CD4-positive, alpha-beta T cell (primary cell): ENCODE measurements at regions of chr10 and their contacts with region 1.

Region 1: GRCh38 chr10:87861953-87862678 is 1.2 kb downstream of the KLLN start:
- DNase-seq: peak; percentile 89 to 98 (median 92)
- ATAC-seq: peak; percentile 72
- H3K4me3 ChIP-seq: peak overlapping the region; percentile 94
- H3K4me3 Mint-ChIP-seq: peak overlapping the region; percentile 96
- H3K27ac ChIP-seq: peak overlapping the region; percentile 81 to 84
- H3K27ac Mint-ChIP-seq: peak overlapping the region; percentile 92
- H3K4me1 ChIP-seq: peaks cover 22% of the 10 kb centered on the region
- H3K4me1 Mint-ChIP-seq: peaks cover 43% of the 10 kb centered on the region
- H3K27me3 ChIP-seq: no peaks in the 10 kb centered on the region
- H3K27me3 Mint-ChIP-seq: no peaks in the 10 kb centered on the region
- CTCF ChIP-seq: no peak

Region 2: GRCh38 chr10:87804939-87805569 is 57.1 kb before region 1 on chr10:
- CTCF ChIA-PET with region 1: no interaction called
- POLR2A ChIA-PET with region 1: no interaction called
- intact Hi-C with region 1: no loop called
- DNase-seq: no peak
- ATAC-seq: no peak
- H3K4me3 ChIP-seq: no peak overlapping the region
- H3K4me3 Mint-ChIP-seq: no peak overlapping the region
- H3K27ac ChIP-seq: no peak overlapping the region
- H3K27ac Mint-ChIP-seq: no peak overlapping the region
- H3K4me1 ChIP-seq: no peaks in the 10 kb centered on the region
- H3K4me1 Mint-ChIP-seq: peaks cover 50% of the 10 kb centered on the region
- H3K27me3 ChIP-seq: no peaks in the 10 kb centered on the region
- H3K27me3 Mint-ChIP-seq: no peaks in the 10 kb centered on the region
- CTCF ChIP-seq: no peak

Region 3: DNA sequence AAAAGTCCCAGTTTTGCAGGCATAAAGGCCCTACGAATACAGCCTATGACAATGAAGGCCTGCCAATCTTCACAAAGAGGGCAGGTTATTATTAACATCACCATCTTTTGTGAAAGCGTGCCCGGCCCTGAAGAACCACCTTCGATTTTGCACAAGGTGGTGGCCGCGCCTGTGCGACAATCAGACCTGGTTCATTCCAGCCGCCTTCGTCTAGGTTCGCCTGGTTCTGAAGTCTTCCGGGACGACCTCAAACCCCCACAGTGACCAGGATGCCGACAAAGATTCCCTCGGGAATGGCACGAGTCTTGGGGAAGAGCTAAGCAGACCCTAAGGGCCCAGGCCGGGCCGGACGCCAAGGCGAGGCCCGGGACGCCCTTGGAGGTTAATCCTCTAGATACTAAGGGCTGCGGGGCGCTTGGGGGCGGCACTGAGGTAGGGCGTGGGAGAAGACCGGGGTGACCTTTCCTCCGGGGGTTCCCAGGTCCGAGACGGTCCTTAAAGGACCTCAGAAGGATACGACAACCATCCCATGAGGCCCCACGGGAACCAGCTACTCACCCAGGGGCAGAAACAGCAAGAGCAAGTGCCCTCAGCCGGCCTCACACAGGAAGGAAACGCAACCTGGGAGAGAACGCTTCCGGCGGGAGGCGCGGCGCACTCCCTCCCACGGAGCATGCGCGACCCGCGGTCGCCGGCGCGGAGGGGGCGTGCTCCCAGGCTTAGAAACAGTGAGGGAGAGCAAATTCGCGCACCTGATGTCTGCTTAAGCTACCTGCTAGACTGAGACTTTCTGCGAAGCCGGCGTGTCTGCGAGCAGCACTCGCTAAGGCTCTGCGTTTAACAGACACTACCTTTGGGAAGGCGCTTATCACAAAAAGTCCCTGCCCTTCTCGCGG is 44.3 kb before region 1 on chr10 and contains the start of gene ATAD1:
- CTCF ChIA-PET with region 1: interaction called, 13 read pairs
- POLR2A ChIA-PET with region 1: interaction called, 105 read pairs
- intact Hi-C with region 1: loop called (anchors 2 to 5 kb)
- DNase-seq: peak; percentile 78 to 95 (median 86)
- ATAC-seq: peak; percentile 79
- H3K4me3 ChIP-seq: peak within 1 kb of the TSS; percentile 93
- H3K4me3 Mint-ChIP-seq: peak within 1 kb of the TSS; percentile 92
- H3K27ac ChIP-seq: peak within 1 kb of the TSS; percentile 93 to 98
- H3K27ac Mint-ChIP-seq: peak within 1 kb of the TSS; percentile 99
- H3K4me1 ChIP-seq: peaks cover 19% of the 10 kb centered on the region
- H3K4me1 Mint-ChIP-seq: peaks cover 47% of the 10 kb centered on the region
- H3K27me3 ChIP-seq: no peaks in the 10 kb centered on the region
- H3K27me3 Mint-ChIP-seq: no peaks in the 10 kb centered on the region
- CTCF ChIP-seq: peak; percentile 5
- total RNA-seq, gene ATAD1: 33.7 to 38.7 TPM

Region 4: DNA sequence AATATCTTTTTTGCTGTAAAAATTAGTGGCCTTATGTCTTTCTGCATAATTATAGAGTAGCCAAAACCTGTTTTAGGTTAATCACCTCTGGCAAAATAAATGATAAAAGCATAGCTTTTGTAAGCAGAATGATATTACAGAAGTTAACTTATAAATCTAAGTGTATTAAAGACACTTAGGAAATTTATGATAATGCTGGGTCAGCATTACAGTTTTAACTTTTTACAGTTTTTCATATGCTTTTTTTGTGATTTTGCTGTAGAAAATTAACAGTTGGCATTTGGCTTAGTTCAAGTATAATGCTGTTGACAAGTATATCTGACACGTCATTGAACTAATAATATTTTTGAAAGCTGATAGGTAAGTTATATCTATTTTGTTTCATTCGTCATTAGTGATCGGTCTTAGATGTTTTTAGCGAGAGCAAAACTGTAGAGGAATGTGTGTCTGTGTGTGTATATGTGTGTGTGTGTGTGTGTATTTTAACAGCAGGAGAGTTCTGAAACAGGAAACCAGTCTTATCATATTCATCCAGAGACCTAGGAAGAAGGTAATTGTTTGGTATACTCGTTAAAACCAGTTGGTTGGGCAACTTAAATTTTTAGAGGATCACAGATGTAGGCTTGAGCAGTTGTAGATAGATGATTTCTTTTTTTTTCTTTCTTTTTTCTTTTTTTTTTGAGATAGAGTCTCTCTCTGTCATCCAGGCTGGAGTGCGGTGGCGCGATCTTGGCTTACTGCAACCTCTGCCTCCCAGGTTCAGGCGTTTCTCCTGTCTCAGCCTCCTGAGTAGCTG is 16.7 kb after region 1 on chr10:
- CTCF ChIA-PET with region 1: interaction called, 7 read pairs
- POLR2A ChIA-PET with region 1: interaction called, 30 read pairs
- intact Hi-C with region 1: loop called in 1 of 2 experiments (anchors 1 kb)
- DNase-seq: no peak
- ATAC-seq: no peak
- H3K4me3 ChIP-seq: no peak overlapping the region
- H3K4me3 Mint-ChIP-seq: peak overlapping the region; percentile 0
- H3K27ac ChIP-seq: no peak overlapping the region
- H3K27ac Mint-ChIP-seq: peak overlapping the region; percentile 4
- H3K4me1 ChIP-seq: no peaks in the 10 kb centered on the region
- H3K4me1 Mint-ChIP-seq: peaks cover 70% of the 10 kb centered on the region
- H3K27me3 ChIP-seq: no peaks in the 10 kb centered on the region
- H3K27me3 Mint-ChIP-seq: no peaks in the 10 kb centered on the region
- CTCF ChIP-seq: no peak

Region 5: GRCh38 chr10:87952612-87953011 is 90.5 kb after region 1 on chr10:
- CTCF ChIA-PET with region 1: no interaction called
- POLR2A ChIA-PET with region 1: interaction called, 9 read pairs
- intact Hi-C with region 1: loop called in 1 of 2 experiments (anchors 5 kb)
- DNase-seq: no peak
- ATAC-seq: no peak
- H3K4me3 ChIP-seq: no peak overlapping the region
- H3K4me3 Mint-ChIP-seq: no peak overlapping the region
- H3K27ac ChIP-seq: no peak overlapping the region
- H3K27ac Mint-ChIP-seq: peak overlapping the region; percentile 1
- H3K4me1 ChIP-seq: no peaks in the 10 kb centered on the region
- H3K4me1 Mint-ChIP-seq: peaks cover 30% of the 10 kb centered on the region
- H3K27me3 ChIP-seq: no peaks in the 10 kb centered on the region
- H3K27me3 Mint-ChIP-seq: no peaks in the 10 kb centered on the region
- CTCF ChIP-seq: no peak

Region 6: GRCh38 chr10:88114368-88114767 is 252.3 kb after region 1 on chr10:
- CTCF ChIA-PET with region 1: interaction called, 4 read pairs
- POLR2A ChIA-PET with region 1: interaction called, 15 read pairs
- intact Hi-C with region 1: loop called (anchors 1 to 2 kb)
- DNase-seq: peak in 7 of 14 experiments; percentile 4 to 64 (median 43)
- ATAC-seq: peak; percentile 62
- H3K4me3 ChIP-seq: no peak overlapping the region
- H3K4me3 Mint-ChIP-seq: no peak overlapping the region
- H3K27ac ChIP-seq: no peak overlapping the region
- H3K27ac Mint-ChIP-seq: no peak overlapping the region
- H3K4me1 ChIP-seq: peaks cover 35% of the 10 kb centered on the region
- H3K4me1 Mint-ChIP-seq: no peaks in the 10 kb centered on the region
- H3K27me3 ChIP-seq: no peaks in the 10 kb centered on the region
- H3K27me3 Mint-ChIP-seq: no peaks in the 10 kb centered on the region
- CTCF ChIP-seq: peak; percentile 50

Region 7: GRCh38 chr10:88386821-88387773 is 525.0 kb after region 1 on chr10:
- CTCF ChIA-PET with region 1: interaction called, 4 read pairs
- POLR2A ChIA-PET with region 1: interaction called, 168 read pairs
- intact Hi-C with region 1: loop called (anchors 1 kb)
- DNase-seq: peak in 5 of 14 experiments; percentile 5 to 60 (median 52)
- ATAC-seq: peak; percentile 56
- H3K4me3 ChIP-seq: no peak overlapping the region
- H3K4me3 Mint-ChIP-seq: no peak overlapping the region
- H3K27ac ChIP-seq: peak overlapping the region; percentile 77 to 89
- H3K27ac Mint-ChIP-seq: no peak overlapping the region
- H3K4me1 ChIP-seq: peaks cover 45% of the 10 kb centered on the region
- H3K4me1 Mint-ChIP-seq: peaks cover 6% of the 10 kb centered on the region
- H3K27me3 ChIP-seq: no peaks in the 10 kb centered on the region
- H3K27me3 Mint-ChIP-seq: no peaks in the 10 kb centered on the region
- CTCF ChIP-seq: no peak

Region 8: GRCh38 chr10:88582806-88583583 is 720.9 kb after region 1 on chr10 and contains the start of gene RNLS:
- CTCF ChIA-PET with region 1: no interaction called
- POLR2A ChIA-PET with region 1: interaction called, 36 read pairs
- intact Hi-C with region 1: no loop called
- DNase-seq: peak; percentile 39 to 85 (median 63)
- ATAC-seq: peak; percentile 82
- H3K4me3 ChIP-seq: peak within 1 kb of the TSS; percentile 83
- H3K4me3 Mint-ChIP-seq: peak within 1 kb of the TSS; percentile 92
- H3K27ac ChIP-seq: peak within 1 kb of the TSS; percentile 77 to 87
- H3K27ac Mint-ChIP-seq: peak within 1 kb of the TSS; percentile 54
- H3K4me1 ChIP-seq: peaks cover 7% of the 10 kb centered on the region
- H3K4me1 Mint-ChIP-seq: peaks cover 14% of the 10 kb centered on the region
- H3K27me3 ChIP-seq: no peaks in the 10 kb centered on the region
- H3K27me3 Mint-ChIP-seq: peaks cover 6% of the 10 kb centered on the region
- CTCF ChIP-seq: peak; percentile 86
- total RNA-seq, gene RNLS: 0.95 to 2.7 TPM